ENCODE measurements at regions of chr1 and their contacts with region 1.

Region 1: GRCh38 chr1:160251687-160252526 is 10.4 kb downstream of the DCAF8 start:
- DNase-seq: peak; percentile 6 to 76 (median 55)
- ATAC-seq: peak; percentile 86 to 98 (median 90)
- H3K4me3 ChIP-seq: no peak overlapping the region
- H3K4me3 Mint-ChIP-seq: no peak overlapping the region
- H3K27ac ChIP-seq: no peak overlapping the region
- H3K27ac Mint-ChIP-seq: peak overlapping the region; percentile 3 to 67
- H3K4me1 ChIP-seq: no peaks in the 10 kb centered on the region
- H3K4me1 Mint-ChIP-seq: peaks cover 22 to 25% (median 23%) of the 10 kb centered on the region in 3 donors
- H3K27me3 ChIP-seq: no peaks in the 10 kb centered on the region
- H3K27me3 Mint-ChIP-seq: no peaks in the 10 kb centered on the region

Region 2: GRCh38 chr1:159675046-159675445 is 576.9 kb before region 1 on chr1:
- CTCF ChIA-PET with region 1: no interaction called
- POLR2A ChIA-PET with region 1: no interaction called
- DNase-seq: no peak
- ATAC-seq: no peak
- H3K4me3 ChIP-seq: no peak overlapping the region
- H3K4me3 Mint-ChIP-seq: no peak overlapping the region
- H3K27ac ChIP-seq: no peak overlapping the region
- H3K27ac Mint-ChIP-seq: no peak overlapping the region
- H3K4me1 ChIP-seq: no peaks in the 10 kb centered on the region
- H3K4me1 Mint-ChIP-seq: no peaks in the 10 kb centered on the region
- H3K27me3 ChIP-seq: peaks cover 0 to 3% of the 10 kb centered on the region in 2 experiments
- H3K27me3 Mint-ChIP-seq: peaks cover 13 to 26% of the 10 kb centered on the region in 2 donors

Region 3: GRCh38 chr1:160098852-160099561 is 152.9 kb before region 1 on chr1:
- CTCF ChIA-PET with region 1: interaction called, 7 to 24 read pairs
- POLR2A ChIA-PET with region 1: no interaction called
- DNase-seq: peak; percentile 93 to 99 (median 98)
- ATAC-seq: peak; percentile 86 to 91 (median 88)
- H3K4me3 ChIP-seq: peak overlapping the region; percentile 60 to 65
- H3K4me3 Mint-ChIP-seq: peak overlapping the region; percentile 68 to 91 (median 78)
- H3K27ac ChIP-seq: peak overlapping the region; percentile 99
- H3K27ac Mint-ChIP-seq: peak overlapping the region; percentile 94 to 98
- H3K4me1 ChIP-seq: peaks cover 12 to 66% of the 10 kb centered on the region in 2 experiments
- H3K4me1 Mint-ChIP-seq: peaks cover 62 to 64% (median 62%) of the 10 kb centered on the region in 3 donors
- H3K27me3 ChIP-seq: peaks cover 0 to 2% of the 10 kb centered on the region in 2 experiments
- H3K27me3 Mint-ChIP-seq: no peaks in the 10 kb centered on the region

Region 4: GRCh38 chr1:160232911-160233310 is 19.0 kb before region 1 on chr1:
- CTCF ChIA-PET with region 1: interaction called in 1 of 2 experiments, 10 read pairs
- POLR2A ChIA-PET with region 1: no interaction called
- DNase-seq: no peak
- ATAC-seq: no peak
- H3K4me3 ChIP-seq: no peak overlapping the region
- H3K4me3 Mint-ChIP-seq: no peak overlapping the region
- H3K27ac ChIP-seq: no peak overlapping the region
- H3K27ac Mint-ChIP-seq: peak overlapping the region in 1 of 2 donors; percentile 6
- H3K4me1 ChIP-seq: no peaks in the 10 kb centered on the region
- H3K4me1 Mint-ChIP-seq: peaks cover 6 to 18% (median 13%) of the 10 kb centered on the region in 3 donors
- H3K27me3 ChIP-seq: no peaks in the 10 kb centered on the region
- H3K27me3 Mint-ChIP-seq: no peaks in the 10 kb centered on the region

Region 5: DNA sequence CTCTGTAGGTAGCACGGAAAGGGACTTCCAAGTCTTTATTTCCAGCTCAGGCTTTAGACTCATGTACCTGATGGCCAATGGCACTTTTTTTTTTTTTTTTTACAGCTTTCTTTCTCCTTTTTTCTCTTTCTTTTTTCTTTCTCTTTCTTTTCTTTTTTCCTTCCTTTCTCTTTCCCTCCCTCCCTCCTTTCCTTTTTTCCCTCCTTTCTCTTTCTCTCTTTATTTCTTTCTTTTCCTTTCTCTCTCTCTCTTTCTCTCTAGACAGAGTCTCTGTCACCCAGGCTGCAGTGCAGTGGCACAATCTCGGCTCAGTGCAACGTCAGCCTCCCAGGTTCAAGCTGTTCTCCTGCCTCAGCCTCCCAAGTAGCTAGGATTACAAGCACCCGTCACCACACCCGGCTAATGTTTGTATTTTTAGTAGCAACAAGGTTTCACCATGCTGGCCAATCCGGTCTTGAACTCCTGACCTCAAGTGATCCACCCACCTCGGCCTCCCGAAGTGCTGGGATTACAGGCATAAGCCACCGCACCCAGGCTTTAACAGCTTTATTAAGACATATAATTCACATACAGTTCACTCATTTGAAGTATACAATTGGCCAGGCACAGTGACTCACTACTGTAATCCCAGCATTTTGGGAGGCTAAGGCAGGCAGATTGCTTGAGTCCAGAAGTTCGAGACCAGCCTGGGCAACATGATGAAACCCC is 15.5 kb after region 1 on chr1:
- CTCF ChIA-PET with region 1: interaction called, 4 to 43 read pairs
- POLR2A ChIA-PET with region 1: interaction called in 1 of 2 experiments, 15 read pairs
- DNase-seq: no peak
- ATAC-seq: no peak
- H3K4me3 ChIP-seq: no peak overlapping the region
- H3K4me3 Mint-ChIP-seq: no peak overlapping the region
- H3K27ac ChIP-seq: no peak overlapping the region
- H3K27ac Mint-ChIP-seq: no peak overlapping the region
- H3K4me1 ChIP-seq: peaks cover 3 to 10% of the 10 kb centered on the region in 2 experiments
- H3K4me1 Mint-ChIP-seq: peaks cover 11 to 12% (median 12%) of the 10 kb centered on the region in 3 donors
- H3K27me3 ChIP-seq: no peaks in the 10 kb centered on the region
- H3K27me3 Mint-ChIP-seq: no peaks in the 10 kb centered on the region

Region 6: GRCh38 chr1:160328184-160328583 is 76.3 kb after region 1 on chr1:
- CTCF ChIA-PET with region 1: no interaction called
- POLR2A ChIA-PET with region 1: no interaction called
- DNase-seq: no peak
- ATAC-seq: no peak
- H3K4me3 ChIP-seq: no peak overlapping the region
- H3K4me3 Mint-ChIP-seq: no peak overlapping the region
- H3K27ac ChIP-seq: no peak overlapping the region
- H3K27ac Mint-ChIP-seq: no peak overlapping the region
- H3K4me1 ChIP-seq: no peaks in the 10 kb centered on the region
- H3K4me1 Mint-ChIP-seq: peaks cover 2 to 14% (median 6%) of the 10 kb centered on the region in 3 donors
- H3K27me3 ChIP-seq: no peaks in the 10 kb centered on the region
- H3K27me3 Mint-ChIP-seq: no peaks in the 10 kb centered on the region

Region 7: GRCh38 chr1:160362168-160362957 is 110.5 kb after region 1 on chr1:
- CTCF ChIA-PET with region 1: no interaction called
- POLR2A ChIA-PET with region 1: no interaction called
- DNase-seq: no peak
- ATAC-seq: no peak
- H3K4me3 ChIP-seq: no peak overlapping the region
- H3K4me3 Mint-ChIP-seq: no peak overlapping the region
- H3K27ac ChIP-seq: no peak overlapping the region
- H3K27ac Mint-ChIP-seq: no peak overlapping the region
- H3K4me1 ChIP-seq: no peaks in the 10 kb centered on the region
- H3K4me1 Mint-ChIP-seq: peaks cover 0 to 6% (median 3%) of the 10 kb centered on the region in 3 donors
- H3K27me3 ChIP-seq: no peaks in the 10 kb centered on the region
- H3K27me3 Mint-ChIP-seq: no peaks in the 10 kb centered on the region